Ascending aorta (tissue), 2 donors: ENCODE measurements at regions of chr5 and their contacts with region 1.

Region 1: DNA sequence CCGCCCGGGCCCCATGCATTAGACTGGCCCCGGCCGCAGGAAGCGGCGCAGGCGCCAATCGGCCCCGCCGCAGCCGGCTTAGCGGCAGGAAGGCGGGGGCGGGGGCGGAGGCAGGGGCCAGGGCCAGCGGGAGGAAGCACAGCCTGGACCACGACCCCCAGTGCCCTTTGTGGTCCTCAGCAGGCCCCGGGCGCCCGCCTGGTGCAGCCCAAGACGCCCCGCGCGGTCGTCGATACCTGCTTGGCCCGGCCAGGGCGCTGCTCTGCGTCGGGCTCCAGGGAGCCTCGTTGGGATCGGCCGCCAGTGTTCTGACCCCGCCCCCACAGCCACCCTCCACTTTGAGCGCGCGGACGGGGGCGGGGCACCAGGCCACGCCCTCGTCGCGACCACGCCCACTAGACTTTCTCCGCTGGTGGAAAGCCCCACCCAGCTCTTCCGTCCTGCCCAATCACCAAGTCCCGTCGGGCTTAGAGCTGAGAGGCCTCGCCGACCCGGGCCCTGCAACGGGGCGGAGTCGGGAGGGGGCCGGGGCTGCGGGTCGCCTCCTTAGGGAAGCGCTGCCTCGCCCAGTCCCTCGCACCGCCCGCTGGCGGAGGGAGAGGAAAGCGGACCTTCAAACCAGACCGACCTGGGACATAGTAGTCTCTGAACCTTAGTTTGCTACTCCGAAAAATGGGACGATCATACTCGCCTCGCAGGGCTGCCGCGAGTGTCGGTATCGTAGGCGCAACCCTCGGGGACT is at the start of gene PDLIM7:
- DNase-seq: peak; percentile 89 to 98
- H3K4me3 ChIP-seq: peak within 1 kb of the TSS; percentile 92 to 93
- H3K27ac ChIP-seq: peak within 1 kb of the TSS; percentile 96 to 99
- H3K4me1 ChIP-seq: peaks cover 23 to 41% of the 10 kb centered on the region in 2 donors
- H3K27me3 ChIP-seq: no peaks in the 10 kb centered on the region
- CTCF ChIP-seq: peak in 1 of 3 experiments; percentile 3
- total RNA-seq, gene PDLIM7: 1,082 TPM

Region 2: GRCh38 chr5:177390363-177391300 is 106.8 kb before region 1 on chr5:
- intact Hi-C with region 1: loop called (anchors 1 kb)
- DNase-seq: peak in 1 of 2 donors; percentile 89
- H3K4me3 ChIP-seq: no peak overlapping the region
- H3K27ac ChIP-seq: no peak overlapping the region
- H3K4me1 ChIP-seq: no peaks in the 10 kb centered on the region
- H3K27me3 ChIP-seq: no peaks in the 10 kb centered on the region
- CTCF ChIP-seq: peak; percentile 94 to 95 (median 94)

Region 3: GRCh38 chr5:177425801-177426565 is 71.5 kb before region 1 on chr5:
- intact Hi-C with region 1: loop called (anchors 1 kb)
- DNase-seq: peak; percentile 100
- H3K4me3 ChIP-seq: peak overlapping the region; percentile 46 to 62
- H3K27ac ChIP-seq: peak overlapping the region; percentile 82 to 83
- H3K4me1 ChIP-seq: peaks cover 14 to 15% of the 10 kb centered on the region in 2 donors
- H3K27me3 ChIP-seq: no peaks in the 10 kb centered on the region
- CTCF ChIP-seq: no peak

Region 4: DNA sequence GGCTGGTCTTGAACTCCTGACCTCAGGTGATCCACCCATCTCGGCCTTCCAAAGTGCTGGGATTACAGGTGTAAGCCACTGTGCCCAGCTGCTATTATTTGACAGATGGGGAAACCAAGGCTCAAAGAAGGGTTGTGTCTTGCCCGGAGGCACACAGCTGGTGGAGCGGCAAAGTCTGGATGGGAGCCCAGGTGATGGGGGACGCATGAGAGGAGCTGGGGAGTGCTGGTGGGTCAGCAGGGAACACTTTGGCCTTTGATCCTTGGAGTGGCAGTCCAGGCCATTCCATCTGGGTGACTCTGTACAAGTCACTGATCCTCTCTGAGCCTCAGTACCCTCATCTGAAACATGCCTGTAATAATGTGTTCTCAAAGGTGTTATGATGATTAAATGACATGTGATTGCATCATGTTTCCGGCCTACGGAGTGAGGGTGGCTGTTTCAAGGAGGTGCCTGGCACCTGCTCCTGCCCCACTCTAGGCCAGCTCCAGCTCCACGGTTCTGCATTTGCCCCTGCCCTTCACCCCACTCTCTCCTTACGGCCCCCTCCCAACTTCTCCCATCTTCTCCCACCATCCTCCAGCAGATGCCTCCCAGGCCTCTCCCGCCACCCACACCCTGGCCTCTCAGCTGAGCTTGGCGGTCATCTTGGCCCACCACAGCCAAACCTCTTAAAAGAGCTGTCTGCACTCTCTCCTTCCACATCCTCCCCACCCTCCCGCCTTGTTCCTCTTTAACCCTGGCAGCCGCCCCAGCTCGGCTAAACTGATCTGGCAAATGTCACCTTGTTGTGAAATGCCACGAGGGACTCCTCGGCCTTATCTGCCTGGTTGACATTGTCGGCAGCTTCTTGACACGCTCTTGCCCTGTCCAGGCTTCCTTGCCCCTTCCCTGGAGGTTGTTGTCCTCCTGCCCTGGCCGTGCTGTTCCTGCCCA is 18.5 kb before region 1 on chr5:
- intact Hi-C with region 1: loop called (anchors 1 kb)
- DNase-seq: peak in 1 of 2 donors; percentile 92
- H3K4me3 ChIP-seq: peak overlapping the region in 1 of 2 donors; percentile 1
- H3K27ac ChIP-seq: peak overlapping the region; percentile 91
- H3K4me1 ChIP-seq: peaks cover 22 to 80% of the 10 kb centered on the region in 2 donors
- H3K27me3 ChIP-seq: no peaks in the 10 kb centered on the region
- CTCF ChIP-seq: no peak

Region 5: GRCh38 chr5:177546258-177546741 is 48.8 kb after region 1 on chr5:
- intact Hi-C with region 1: loop called (anchors 2 kb)
- DNase-seq: peak; percentile 31 to 91
- H3K4me3 ChIP-seq: peak overlapping the region in 1 of 2 donors; percentile 9
- H3K27ac ChIP-seq: peak overlapping the region; percentile 89 to 93
- H3K4me1 ChIP-seq: peaks cover 21 to 58% of the 10 kb centered on the region in 2 donors
- H3K27me3 ChIP-seq: no peaks in the 10 kb centered on the region
- CTCF ChIP-seq: no peak